Vagina (tissue), 2 donors: ENCODE measurements at regions of chr4 and their contacts with region 1.

Region 1: GRCh38 chr4:168831919-168832762 is 177.9 kb downstream of the CBR4 start:
- DNase-seq: peak in 1 of 2 donors; percentile 92
- H3K4me3 ChIP-seq: peak overlapping the region; percentile 69 to 89
- H3K27ac ChIP-seq: peak overlapping the region; percentile 92
- H3K4me1 ChIP-seq: peaks cover 46% of the 10 kb centered on the region
- H3K27me3 ChIP-seq: no peaks in the 10 kb centered on the region
- CTCF ChIP-seq: no peak
- POLR2A ChIP-seq: peak in 1 of 2 donors; percentile 95

Region 2: GRCh38 chr4:168631241-168632162 is 200.6 kb before region 1 on chr4:
- intact Hi-C with region 1: loop called (anchors 10 kb)
- DNase-seq: no peak
- H3K4me3 ChIP-seq: peak overlapping the region; percentile 56 to 58
- H3K27ac ChIP-seq: peak overlapping the region; percentile 80
- H3K4me1 ChIP-seq: peaks cover 35% of the 10 kb centered on the region
- H3K27me3 ChIP-seq: no peaks in the 10 kb centered on the region
- CTCF ChIP-seq: peak in 1 of 3 experiments; percentile 43
- POLR2A ChIP-seq: peak in 1 of 2 donors; percentile 6

Region 3: GRCh38 chr4:168710353-168710946 is 121.7 kb before region 1 on chr4:
- intact Hi-C with region 1: loop called (anchors 10 kb)
- DNase-seq: no peak
- H3K4me3 ChIP-seq: no peak overlapping the region
- H3K27ac ChIP-seq: no peak overlapping the region
- H3K4me1 ChIP-seq: peaks cover 17% of the 10 kb centered on the region
- H3K27me3 ChIP-seq: no peaks in the 10 kb centered on the region
- CTCF ChIP-seq: peak; percentile 28 to 58 (median 51)
- POLR2A ChIP-seq: no peak

Region 4: DNA sequence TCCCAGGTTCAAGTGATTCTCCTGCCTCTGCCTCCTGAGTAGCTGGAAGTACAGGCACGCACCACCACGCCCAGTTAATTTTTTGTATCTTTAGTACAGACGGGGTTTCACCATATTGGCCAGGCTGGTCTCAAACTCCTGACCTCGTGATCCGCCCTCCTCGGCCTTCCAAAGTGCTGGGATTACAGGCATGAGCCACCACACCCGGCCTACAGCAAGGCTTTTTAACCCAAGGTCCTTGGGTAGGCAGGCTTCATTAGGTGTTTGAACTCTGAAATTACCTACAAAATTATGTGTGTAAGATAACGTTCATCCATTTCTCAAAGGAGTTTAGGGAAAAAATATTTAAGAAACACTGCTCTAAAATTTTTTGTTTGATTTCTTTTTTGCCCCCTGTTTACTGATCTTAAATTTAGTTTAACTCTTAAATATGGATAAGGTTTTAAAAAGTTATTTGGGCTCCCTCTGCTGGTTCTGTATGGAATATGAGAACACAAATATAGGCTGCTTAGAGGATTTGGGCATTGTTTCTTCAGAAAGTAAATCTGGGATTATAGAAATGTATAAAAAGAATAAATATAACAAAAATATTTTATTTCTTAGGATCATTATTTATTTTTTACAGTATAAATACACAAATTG is 85.1 kb after region 1 on chr4:
- intact Hi-C with region 1: loop called (anchors 10 kb)
- DNase-seq: no peak
- H3K4me3 ChIP-seq: no peak overlapping the region
- H3K27ac ChIP-seq: peak overlapping the region; percentile 27
- H3K4me1 ChIP-seq: no peaks in the 10 kb centered on the region
- H3K27me3 ChIP-seq: no peaks in the 10 kb centered on the region
- CTCF ChIP-seq: peak; percentile 42 to 73 (median 50)
- POLR2A ChIP-seq: no peak